ENCODE measurements at regions of chr1 and their contacts with region 1.

Region 1: DNA sequence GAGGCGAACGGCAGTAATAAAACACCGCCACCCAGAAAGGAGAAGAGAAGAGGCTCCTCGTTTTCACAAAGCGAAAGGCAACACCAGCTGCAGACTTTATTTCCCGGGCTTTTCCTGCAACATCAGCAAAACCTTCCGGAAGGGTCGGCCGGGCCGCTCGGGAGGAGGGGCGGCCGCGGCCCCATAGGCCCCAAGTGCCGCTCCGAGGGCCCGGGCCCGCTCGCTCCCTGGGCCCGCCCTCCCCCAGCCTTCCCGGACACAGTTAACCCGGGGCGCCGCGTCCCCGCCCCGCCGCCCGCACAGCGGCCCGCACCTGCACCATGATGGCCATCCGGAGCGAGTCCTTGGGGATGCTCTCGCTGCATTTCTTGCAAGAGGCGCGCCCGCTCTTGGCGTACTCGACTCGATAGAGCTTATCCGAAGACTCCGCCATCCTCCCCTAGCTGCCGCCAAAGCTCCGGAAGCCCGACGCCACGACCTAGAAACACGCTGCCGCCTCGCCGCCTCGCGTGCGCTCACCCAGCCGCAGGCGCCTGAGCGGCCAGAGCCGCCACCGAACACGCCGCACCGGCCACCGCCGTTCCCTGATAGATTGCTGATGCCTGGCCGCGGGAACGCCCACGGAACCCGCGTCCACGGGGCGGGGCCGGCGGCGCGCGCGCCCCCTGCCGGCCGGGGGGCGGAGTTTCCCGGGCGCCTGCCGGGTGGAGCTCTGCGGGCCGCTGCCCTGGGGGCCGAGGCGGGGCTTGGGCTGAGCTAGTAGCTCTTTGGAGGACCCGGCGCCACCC is at the start of gene PARP1:
- DNase-seq: peak; percentile 97
- H3K4me3 ChIP-seq: peak within 1 kb of the TSS; percentile 76 to 86 (median 82)
- H3K27ac ChIP-seq: peak within 1 kb of the TSS; percentile 89 to 94 (median 93)
- H3K4me1 ChIP-seq: peaks cover 0 to 46% (median 43%) of the 10 kb centered on the region in 4 donors
- H3K27me3 ChIP-seq: no peaks in the 10 kb centered on the region
- CTCF ChIP-seq: peak in 1 of 4 experiments; percentile 81
- EP300 ChIP-seq: no peak
- POLR2A ChIP-seq: peak; percentile 68 to 77
- total RNA-seq, gene PARP1: 107 to 168 (median 152) TPM

Region 2: DNA sequence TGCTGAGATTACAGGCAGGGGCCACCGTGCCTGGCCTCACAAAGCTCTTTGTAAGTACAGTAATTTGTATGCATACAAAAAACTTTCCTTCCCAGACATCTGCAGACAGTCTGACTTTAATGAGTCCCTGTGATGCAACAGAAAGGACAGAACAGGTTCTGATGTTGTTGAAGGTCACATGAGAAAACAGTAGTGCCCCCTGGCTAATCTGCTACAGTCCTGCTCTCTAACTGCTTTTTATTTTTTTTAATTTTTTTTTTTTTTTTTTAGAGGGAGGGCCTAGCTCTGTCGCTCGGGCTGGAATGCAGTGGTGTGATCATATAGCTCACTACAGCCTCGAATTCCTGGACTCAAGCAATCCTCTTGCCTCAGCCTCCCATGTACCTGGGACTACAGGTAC is 257.9 kb before region 1 on chr1:
- intact Hi-C with region 1: no loop called
- DNase-seq: no peak
- H3K4me3 ChIP-seq: no peak overlapping the region
- H3K27ac ChIP-seq: no peak overlapping the region
- H3K4me1 ChIP-seq: no peaks in the 10 kb centered on the region
- H3K27me3 ChIP-seq: no peaks in the 10 kb centered on the region
- CTCF ChIP-seq: no peak
- EP300 ChIP-seq: no peak
- POLR2A ChIP-seq: no peak

Region 3: GRCh38 chr1:226308723-226309315 is 98.9 kb before region 1 on chr1 and contains the start of gene LIN9:
- intact Hi-C with region 1: loop called (anchors 5 kb)
- DNase-seq: peak; percentile 93
- H3K4me3 ChIP-seq: peak within 1 kb of the TSS; percentile 67 to 96 (median 80)
- H3K27ac ChIP-seq: peak within 1 kb of the TSS; percentile 73 to 84 (median 77)
- H3K4me1 ChIP-seq: peaks cover 0 to 18% (median 11%) of the 10 kb centered on the region in 4 donors
- H3K27me3 ChIP-seq: no peaks in the 10 kb centered on the region
- CTCF ChIP-seq: no peak
- EP300 ChIP-seq: no peak
- POLR2A ChIP-seq: no peak
- total RNA-seq, gene LIN9: 3.1 to 5.4 (median 4.6) TPM

Region 4: GRCh38 chr1:226349801-226350518 is 57.7 kb before region 1 on chr1:
- intact Hi-C with region 1: no loop called
- DNase-seq: no peak
- H3K4me3 ChIP-seq: no peak overlapping the region
- H3K27ac ChIP-seq: no peak overlapping the region
- H3K4me1 ChIP-seq: peaks cover 0 to 22% (median 18%) of the 10 kb centered on the region in 4 donors
- H3K27me3 ChIP-seq: no peaks in the 10 kb centered on the region
- CTCF ChIP-seq: no peak
- EP300 ChIP-seq: no peak
- POLR2A ChIP-seq: no peak